ENCODE measurements at regions of chr14 and their contacts with region 1.

Region 1: DNA sequence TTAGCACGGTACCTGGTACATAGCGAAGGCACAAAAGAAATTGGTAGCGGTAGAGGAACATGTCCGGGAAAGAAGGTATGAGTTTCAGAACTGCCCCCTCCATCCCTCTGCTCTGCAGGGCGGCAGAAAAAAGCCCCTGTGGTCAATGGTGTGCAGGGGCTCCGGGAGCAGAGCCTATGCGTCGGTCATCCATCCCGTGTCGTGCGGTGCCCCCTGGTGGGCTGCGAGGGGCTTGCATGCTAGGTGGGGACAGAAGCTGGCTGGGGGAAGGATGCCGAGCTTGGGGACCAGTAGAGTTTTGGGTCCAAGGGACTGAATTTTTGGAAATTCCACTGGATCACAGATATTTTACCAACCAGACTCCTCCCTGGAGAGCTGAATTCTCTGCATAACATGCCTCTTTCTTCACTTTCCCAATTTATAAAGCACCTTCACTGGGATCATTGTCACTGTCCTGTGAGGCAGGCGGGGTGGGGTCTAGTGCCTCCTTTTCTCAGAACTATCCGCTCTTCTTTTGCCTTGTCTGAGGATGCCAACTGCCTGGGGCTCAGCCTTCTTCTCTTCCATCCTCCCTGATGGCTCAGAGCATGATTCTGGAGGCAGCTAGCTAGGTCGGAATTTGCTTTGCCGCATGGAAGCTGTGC is 148.7 kb downstream of the SMOC1 start:
- DNase-seq: peak; percentile 55 to 81
- ATAC-seq: peak; percentile 78 to 92
- H3K4me3 ChIP-seq: no peak overlapping the region
- H3K27ac ChIP-seq: peak overlapping the region; percentile 58 to 75
- H3K4me1 ChIP-seq: peaks cover 18% of the 10 kb centered on the region
- CTCF ChIP-seq: peak; percentile 78
- EP300 ChIP-seq: no peak
- POLR2A ChIP-seq: no peak
- RAD21 ChIP-seq: peak; percentile 96 to 97

Region 2: DNA sequence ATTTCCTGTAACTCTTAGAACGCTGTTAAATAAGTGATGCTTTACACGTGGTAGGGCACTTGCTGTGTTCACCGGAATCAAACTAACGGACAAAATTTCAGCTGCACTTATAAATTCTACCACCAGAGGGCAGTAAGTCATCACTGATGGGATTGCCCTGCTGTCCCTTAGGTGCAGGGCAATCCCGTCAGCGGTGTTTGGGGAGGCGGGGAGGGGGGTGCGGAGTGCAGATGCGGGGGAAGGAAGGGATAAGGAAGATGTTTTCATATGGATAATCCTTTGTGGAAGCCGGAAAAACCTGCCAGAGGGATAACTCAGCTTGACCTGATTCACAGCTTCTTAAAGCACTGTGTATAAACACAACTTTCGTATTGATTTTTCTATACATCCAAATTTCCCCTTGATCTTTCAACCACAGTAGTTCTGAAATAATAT is 209.1 kb before region 1 on chr14:
- CTCF ChIA-PET with region 1: interaction called, 199 read pairs
- POLR2A ChIA-PET with region 1: interaction called, 5 read pairs
- DNase-seq: peak; percentile 67 to 71
- ATAC-seq: peak; percentile 82 to 96
- H3K4me3 ChIP-seq: no peak overlapping the region
- H3K27ac ChIP-seq: peak overlapping the region; percentile 65 to 69
- H3K4me1 ChIP-seq: no peaks in the 10 kb centered on the region; the same call in 1 of the 3 replicates
- CTCF ChIP-seq: peak; percentile 96
- EP300 ChIP-seq: no peak
- POLR2A ChIP-seq: no peak
- RAD21 ChIP-seq: peak; percentile 95 to 99

Region 3: DNA sequence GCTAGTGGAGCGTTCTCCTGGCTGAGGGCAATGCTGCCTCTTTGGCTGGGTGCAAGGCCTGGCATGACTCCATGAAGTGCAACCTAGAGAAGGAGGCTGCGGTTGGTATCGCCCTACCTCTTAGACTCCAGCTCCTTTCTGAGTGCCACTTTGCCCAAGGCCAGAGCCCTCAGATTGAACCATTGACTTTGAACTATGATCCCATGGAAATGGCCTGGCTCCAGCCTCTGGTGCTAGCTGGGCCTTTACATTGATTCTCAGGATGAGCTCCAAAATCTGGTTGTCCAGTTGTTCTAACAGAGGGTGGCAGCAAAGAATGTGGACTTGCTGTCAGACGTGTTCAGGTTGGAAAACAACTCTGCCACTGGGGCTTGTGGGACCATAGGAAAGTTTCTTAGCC is 164.8 kb before region 1 on chr14:
- CTCF ChIA-PET with region 1: interaction called, 11 read pairs
- POLR2A ChIA-PET with region 1: no interaction called
- DNase-seq: no peak
- ATAC-seq: no peak
- H3K4me3 ChIP-seq: no peak overlapping the region
- H3K27ac ChIP-seq: no peak overlapping the region
- H3K4me1 ChIP-seq: no peaks in the 10 kb centered on the region
- CTCF ChIP-seq: no peak
- EP300 ChIP-seq: no peak
- POLR2A ChIP-seq: no peak
- RAD21 ChIP-seq: peak in 1 of 2 experiments; percentile 3; a peak in 1 of 5 replicates

Region 4: GRCh38 chr14:69997849-69998248 is 30.1 kb before region 1 on chr14:
- CTCF ChIA-PET with region 1: interaction called, 17 read pairs
- POLR2A ChIA-PET with region 1: no interaction called
- DNase-seq: peak; percentile 40 to 87
- ATAC-seq: peak; percentile 70 to 71
- H3K4me3 ChIP-seq: no peak overlapping the region
- H3K27ac ChIP-seq: peak overlapping the region; percentile 90 to 98
- H3K4me1 ChIP-seq: peaks cover 60% of the 10 kb centered on the region
- CTCF ChIP-seq: no peak
- EP300 ChIP-seq: peak; percentile 94 to 97; a peak in 4 of 5 replicates
- POLR2A ChIP-seq: no peak
- RAD21 ChIP-seq: peak in 1 of 2 experiments; percentile 61; a peak in 2 of 5 replicates

Region 5: GRCh38 chr14:70045844-70046535 is 18.1 kb after region 1 on chr14:
- CTCF ChIA-PET with region 1: interaction called, 23 read pairs
- POLR2A ChIA-PET with region 1: no interaction called
- DNase-seq: peak; percentile 71 to 82
- ATAC-seq: peak; percentile 87 to 95
- H3K4me3 ChIP-seq: no peak overlapping the region
- H3K27ac ChIP-seq: peak overlapping the region; percentile 89 to 90
- H3K4me1 ChIP-seq: peaks cover 39% of the 10 kb centered on the region
- CTCF ChIP-seq: peak; percentile 74
- EP300 ChIP-seq: no peak
- POLR2A ChIP-seq: no peak; the same call in 1 of the 2 replicates
- RAD21 ChIP-seq: peak; percentile 90

Region 6: DNA sequence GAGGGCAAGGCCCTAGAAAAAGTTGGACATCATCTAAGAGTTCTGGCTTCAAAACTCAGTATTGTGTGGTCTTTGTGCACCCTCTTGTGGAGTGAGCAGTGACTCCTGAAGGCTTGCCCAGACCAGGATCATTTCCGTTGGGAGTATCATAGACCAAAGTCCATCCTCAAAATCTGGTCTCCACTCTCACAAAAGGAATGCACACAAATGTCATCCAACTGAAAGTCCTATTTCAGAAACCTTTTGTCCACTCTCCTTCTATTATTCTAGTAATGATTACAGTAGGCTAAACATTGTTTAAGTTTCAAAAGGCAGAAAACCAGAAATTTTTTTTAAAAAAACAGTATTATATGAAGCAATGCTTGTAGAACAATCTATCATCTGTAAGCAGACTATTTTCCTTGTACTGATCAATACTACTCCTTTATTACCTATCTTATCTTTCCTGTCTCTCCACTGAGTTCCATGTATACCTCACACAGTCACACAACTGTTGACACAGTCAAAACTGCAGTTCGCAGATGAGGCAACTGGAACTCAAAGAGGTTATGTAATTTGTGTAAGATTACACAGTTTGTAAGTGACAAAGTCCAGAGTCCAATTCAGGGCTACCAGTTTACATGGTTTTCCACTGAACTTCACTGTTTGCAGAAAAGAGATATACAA is 290.2 kb after region 1 on chr14:
- CTCF ChIA-PET with region 1: interaction called, 10 read pairs
- POLR2A ChIA-PET with region 1: no interaction called
- DNase-seq: peak; percentile 40 to 78
- ATAC-seq: peak; percentile 97
- H3K4me3 ChIP-seq: peak overlapping the region; percentile 8; the same call in 1 of the 3 replicates
- H3K27ac ChIP-seq: 0 out of 6 replicates have a peak overlapping the region, but pooled peaks of 1 of the 2 experiments have one; percentile 11
- H3K4me1 ChIP-seq: peaks cover 16% of the 10 kb centered on the region; the same call in 2 of the 3 replicates
- CTCF ChIP-seq: peak; percentile 83
- EP300 ChIP-seq: no peak
- POLR2A ChIP-seq: no peak
- RAD21 ChIP-seq: peak; percentile 78 to 92

Measured in A549 (cell line).